RWPE1 (cell line): ENCODE measurements at regions of chr19 and their contacts with region 1.

Region 1: DNA sequence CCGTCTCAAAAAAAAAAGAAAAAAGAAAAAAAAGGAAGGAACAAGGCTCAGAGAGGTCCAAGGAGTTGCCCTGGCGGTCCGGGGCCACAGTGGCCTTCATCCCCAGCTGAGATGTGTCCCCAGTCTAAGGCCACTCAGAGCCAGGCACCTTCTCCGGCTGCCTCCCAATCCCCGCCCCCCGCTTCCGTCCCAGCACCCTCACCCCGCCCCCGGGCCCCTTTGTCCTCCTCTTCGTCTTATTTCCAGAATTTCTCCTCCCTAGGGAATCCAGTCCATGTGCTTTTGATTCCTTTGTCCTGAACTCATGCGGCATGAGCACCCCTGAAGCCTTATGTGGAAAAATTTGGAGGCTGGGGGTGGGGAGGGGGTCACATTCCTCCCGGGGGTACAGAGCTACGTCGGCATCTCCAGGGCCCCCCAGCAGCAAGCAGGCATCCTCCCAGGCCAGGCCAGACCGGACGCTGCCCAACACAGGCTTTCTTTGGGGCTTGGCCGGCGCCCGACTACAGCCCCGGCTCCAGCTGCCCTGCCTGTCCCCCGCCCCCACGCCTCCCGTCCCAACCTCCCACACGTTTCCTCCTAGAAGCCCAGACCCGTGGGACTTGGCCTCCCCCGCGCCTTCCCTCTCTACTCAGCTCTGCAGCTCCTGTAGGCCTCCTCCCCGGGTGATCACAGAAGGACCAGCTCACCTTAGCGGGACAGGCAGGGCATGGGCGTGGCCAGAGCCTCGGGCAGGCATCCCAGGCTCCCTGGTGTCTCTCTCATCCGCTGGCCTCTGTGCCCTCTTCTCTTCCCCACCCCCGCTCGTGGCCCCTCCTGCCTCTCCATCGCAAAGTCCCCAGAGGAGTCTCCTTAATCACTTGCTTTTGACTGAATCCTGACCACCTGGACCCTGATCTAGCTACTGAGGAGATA is 17.8 kb upstream of the ADGRE5 start:
- DNase-seq: peak; percentile 59
- H3K27ac ChIP-seq: peak overlapping the region; percentile 58
- CTCF ChIP-seq: no peak

Region 2: DNA sequence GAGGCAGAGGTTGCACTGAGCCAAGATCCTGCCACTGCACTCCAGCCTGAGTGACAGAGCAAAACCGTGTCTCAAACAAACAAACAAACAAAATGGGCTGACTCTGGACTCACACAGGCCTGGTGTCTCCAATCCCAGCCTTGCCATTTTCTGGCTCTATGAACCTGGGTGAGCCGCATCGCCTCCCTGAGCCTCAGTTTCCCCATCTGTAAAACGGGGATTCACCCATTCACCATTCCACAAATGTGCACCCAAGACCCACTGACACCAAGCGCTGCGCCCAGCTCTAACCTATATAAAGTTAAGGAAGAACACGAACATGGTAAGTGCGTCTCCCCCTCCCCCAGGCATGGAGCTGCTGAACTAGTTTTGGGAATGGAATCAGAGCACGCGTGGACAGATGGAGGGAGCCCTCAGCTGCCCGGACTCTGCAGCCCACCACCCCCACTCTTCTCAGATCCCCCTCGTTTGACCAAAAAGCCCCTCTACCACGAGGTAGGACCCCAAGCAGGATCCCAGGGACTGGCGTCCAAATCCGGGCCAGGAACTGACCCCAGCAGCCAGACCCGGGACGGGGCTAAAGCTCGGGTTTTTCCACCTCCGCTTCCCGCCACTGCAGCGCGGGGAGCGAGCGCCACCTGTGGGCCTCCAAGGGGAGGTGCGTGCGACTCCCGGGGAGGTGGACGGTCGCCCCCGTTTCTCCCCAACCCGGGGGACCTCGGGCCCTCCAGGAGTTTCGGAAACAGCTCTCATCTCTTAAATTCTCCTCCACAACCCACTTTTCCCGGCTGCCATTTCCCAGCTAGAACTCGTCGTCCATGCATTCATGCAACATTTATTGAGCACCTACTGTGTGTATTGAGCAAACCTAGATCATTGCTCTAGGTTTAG is 15.2 kb before region 1 on chr19:
- CTCF ChIA-PET with region 1: interaction called, 10 read pairs
- POLR2A ChIA-PET with region 1: no interaction called
- DNase-seq: peak; percentile 81
- H3K27ac ChIP-seq: no peak overlapping the region
- CTCF ChIP-seq: peak; percentile 99

Region 3: GRCh38 chr19:15048128-15048527 is 684.7 kb after region 1 on chr19:
- CTCF ChIA-PET with region 1: interaction called, 10 read pairs
- POLR2A ChIA-PET with region 1: no interaction called
- DNase-seq: no peak
- H3K27ac ChIP-seq: no peak overlapping the region
- CTCF ChIP-seq: no peak